ENCODE measurements at regions of chr6 and their contacts with region 1.

Region 1: DNA sequence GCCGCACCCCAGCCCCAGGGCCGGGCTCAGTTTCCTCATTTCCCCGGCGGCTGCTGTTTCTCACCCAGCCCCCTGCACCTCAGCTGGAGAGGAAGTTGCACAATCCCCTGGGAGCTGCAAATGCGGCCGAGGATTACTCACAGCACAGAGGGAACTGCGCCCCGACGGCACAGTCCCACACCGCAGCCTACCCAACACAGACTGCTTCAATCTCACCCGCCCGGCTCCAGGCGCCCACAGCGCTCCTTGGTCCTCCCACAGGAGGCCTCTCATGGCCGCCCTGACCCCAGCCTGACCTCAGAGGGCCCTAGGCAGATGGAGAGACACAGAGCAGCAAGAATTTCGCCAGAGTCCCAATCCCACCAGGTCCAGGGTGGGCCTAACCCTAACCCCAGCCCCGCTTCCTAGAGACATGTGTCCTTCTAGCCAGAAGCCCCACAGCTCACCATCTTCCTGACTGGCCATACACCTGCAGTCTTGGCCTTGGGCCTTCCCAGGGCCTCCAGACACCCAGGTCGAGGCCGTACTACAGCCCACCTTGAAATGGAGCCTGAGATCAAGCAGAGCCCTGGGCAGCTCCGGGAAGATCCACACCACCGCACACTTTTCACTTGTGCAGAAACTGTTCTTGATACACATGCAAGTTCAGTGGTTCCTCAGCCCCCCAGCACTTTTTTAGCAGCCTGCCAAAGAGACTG is 11.7 kb downstream of the TFEB start:
- DNase-seq: peak; percentile 91
- ATAC-seq: peak; percentile 90
- H3K4me3 ChIP-seq: peak overlapping the region; percentile 48 to 73 (median 59)
- H3K4me3 Mint-ChIP-seq: peak overlapping the region; percentile 96
- H3K27ac ChIP-seq: peak overlapping the region; percentile 87 to 90
- H3K27ac Mint-ChIP-seq: peak overlapping the region; percentile 99
- H3K4me1 ChIP-seq: peaks cover 95 to 100% of the 10 kb centered on the region in 2 donors
- H3K4me1 Mint-ChIP-seq: peaks cover 95% of the 10 kb centered on the region
- H3K27me3 ChIP-seq: no peaks in the 10 kb centered on the region
- H3K27me3 Mint-ChIP-seq: no peaks in the 10 kb centered on the region
- CTCF ChIP-seq: no peak

Region 2: DNA sequence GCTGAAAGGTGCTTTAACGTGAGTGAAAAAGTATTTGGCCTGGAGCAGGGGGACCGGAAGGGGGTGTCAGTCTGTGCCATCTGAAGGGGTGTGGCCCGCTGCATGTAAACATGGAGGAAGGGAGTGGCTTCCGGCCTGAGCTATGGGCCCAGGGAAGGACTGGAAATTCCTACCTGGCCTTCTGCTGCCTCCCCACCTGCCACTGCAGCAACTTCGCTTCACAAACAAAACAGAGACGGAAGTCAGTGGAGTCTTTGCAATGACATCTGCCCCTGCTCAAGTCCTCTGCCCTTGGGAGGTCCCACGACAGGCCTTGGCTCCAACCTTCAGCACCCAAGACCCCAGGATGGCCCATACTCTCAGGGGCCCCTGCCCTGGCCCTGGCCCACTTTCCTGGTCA is 205.6 kb before region 1 on chr6:
- CTCF ChIA-PET with region 1: no interaction called
- POLR2A ChIA-PET with region 1: no interaction called
- intact Hi-C with region 1: no loop called
- DNase-seq: no peak
- ATAC-seq: no peak
- H3K4me3 ChIP-seq: no peak overlapping the region
- H3K4me3 Mint-ChIP-seq: no peak overlapping the region
- H3K27ac ChIP-seq: no peak overlapping the region
- H3K27ac Mint-ChIP-seq: no peak overlapping the region
- H3K4me1 ChIP-seq: no peaks in the 10 kb centered on the region
- H3K4me1 Mint-ChIP-seq: no peaks in the 10 kb centered on the region
- H3K27me3 ChIP-seq: peaks cover 0 to 2% (median 0%) of the 10 kb centered on the region in 4 experiments
- H3K27me3 Mint-ChIP-seq: peaks cover 20% of the 10 kb centered on the region
- CTCF ChIP-seq: no peak

Region 3: GRCh38 chr6:41705996-41706835 is 17.5 kb before region 1 on chr6:
- CTCF ChIA-PET with region 1: interaction called, 176 read pairs
- POLR2A ChIA-PET with region 1: interaction called, 342 read pairs
- intact Hi-C with region 1: loop called (anchors 1 kb)
- DNase-seq: peak; percentile 94
- ATAC-seq: peak; percentile 81
- H3K4me3 ChIP-seq: peak overlapping the region in 4 of 5 experiments; percentile 33 to 65 (median 56)
- H3K4me3 Mint-ChIP-seq: peak overlapping the region; percentile 86
- H3K27ac ChIP-seq: peak overlapping the region; percentile 83 to 96
- H3K27ac Mint-ChIP-seq: peak overlapping the region; percentile 100
- H3K4me1 ChIP-seq: peaks cover 84 to 87% of the 10 kb centered on the region in 2 donors
- H3K4me1 Mint-ChIP-seq: peaks cover 97% of the 10 kb centered on the region
- H3K27me3 ChIP-seq: no peaks in the 10 kb centered on the region
- H3K27me3 Mint-ChIP-seq: no peaks in the 10 kb centered on the region
- CTCF ChIP-seq: peak; percentile 89

Region 4: DNA sequence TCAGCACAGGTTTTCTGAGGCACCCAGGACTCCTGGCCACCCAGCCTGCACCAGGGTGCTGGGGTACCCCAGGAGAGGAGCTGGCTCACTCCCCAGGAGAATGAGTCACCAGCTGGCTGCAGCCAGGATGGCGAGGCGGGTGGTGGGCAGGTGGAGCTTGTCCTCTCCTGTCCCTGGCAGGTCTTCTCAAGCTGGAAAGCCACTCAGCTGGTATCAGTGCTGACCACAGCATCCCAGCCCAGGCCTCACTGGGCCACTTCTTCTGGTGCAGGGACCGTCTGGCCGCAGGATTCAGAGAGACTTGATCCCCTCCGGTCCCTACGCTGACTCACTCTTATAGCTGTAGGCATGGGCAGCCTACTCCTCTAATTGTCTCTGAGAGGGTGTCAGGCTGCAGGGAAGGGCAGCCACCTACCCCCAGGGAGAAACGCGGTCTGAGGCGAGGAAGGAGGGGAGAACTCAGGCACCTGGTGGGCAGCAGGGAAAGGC is 10.5 kb before region 1 on chr6:
- CTCF ChIA-PET with region 1: interaction called, 176 read pairs
- POLR2A ChIA-PET with region 1: interaction called, 342 read pairs
- intact Hi-C with region 1: loop called (anchors 1 kb)
- DNase-seq: no peak
- ATAC-seq: peak; percentile 2
- H3K4me3 ChIP-seq: peak overlapping the region in 1 of 5 experiments; percentile 19
- H3K4me3 Mint-ChIP-seq: peak overlapping the region; percentile 75
- H3K27ac ChIP-seq: peak overlapping the region; percentile 43 to 77
- H3K27ac Mint-ChIP-seq: peak overlapping the region; percentile 94
- H3K4me1 ChIP-seq: peaks cover 73 to 87% of the 10 kb centered on the region in 2 donors
- H3K4me1 Mint-ChIP-seq: peaks cover 91% of the 10 kb centered on the region
- H3K27me3 ChIP-seq: no peaks in the 10 kb centered on the region
- H3K27me3 Mint-ChIP-seq: no peaks in the 10 kb centered on the region
- CTCF ChIP-seq: no peak

Region 5: DNA sequence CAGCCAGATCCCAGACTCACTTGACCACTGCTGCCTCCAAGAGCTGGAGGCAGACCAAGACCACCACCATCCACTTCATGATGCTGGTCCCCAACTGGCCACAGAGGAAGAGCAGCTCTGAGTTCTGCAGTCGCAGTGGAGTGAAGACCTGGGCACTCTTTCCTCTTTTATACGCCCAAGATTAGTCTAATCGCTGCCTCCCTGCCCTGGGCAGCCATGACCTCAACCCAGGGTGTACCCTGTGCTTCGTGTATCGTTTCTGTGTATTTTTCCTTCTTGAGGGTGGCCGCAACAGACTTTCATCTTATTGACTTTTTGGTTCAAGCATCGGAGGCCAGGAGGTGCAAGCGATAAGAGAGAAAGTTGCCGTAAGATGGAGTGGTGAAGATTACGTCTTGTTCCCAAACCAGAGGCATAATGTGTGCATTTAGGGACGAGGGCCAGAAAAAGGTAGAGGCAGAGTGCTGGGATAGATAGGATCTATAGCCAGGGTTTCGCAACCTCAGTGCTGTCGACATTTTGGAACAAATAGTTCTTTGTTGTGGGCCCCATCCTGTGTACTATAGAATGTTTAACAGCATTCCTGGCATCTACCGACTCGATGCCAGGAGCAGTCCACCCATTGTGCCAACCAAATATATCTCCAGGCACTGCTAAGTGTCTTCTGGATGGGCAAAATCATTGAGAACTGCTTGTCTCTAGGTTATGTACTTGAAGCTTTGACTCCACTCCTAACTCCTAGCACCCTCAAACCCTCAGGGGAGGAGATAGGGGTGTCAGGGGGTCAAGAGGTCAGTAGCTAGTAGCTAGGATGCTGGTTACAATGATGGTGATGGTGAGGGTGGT is 23.8 kb after region 1 on chr6 and contains the start of gene PGC:
- CTCF ChIA-PET with region 1: no interaction called
- POLR2A ChIA-PET with region 1: no interaction called
- intact Hi-C with region 1: no loop called
- DNase-seq: no peak
- ATAC-seq: no peak
- H3K4me3 ChIP-seq: no peak within 1 kb of the TSS
- H3K4me3 Mint-ChIP-seq: no peak within 1 kb of the TSS
- H3K27ac ChIP-seq: no peak within 1 kb of the TSS
- H3K27ac Mint-ChIP-seq: no peak within 1 kb of the TSS
- H3K4me1 ChIP-seq: no peaks in the 10 kb centered on the region
- H3K4me1 Mint-ChIP-seq: no peaks in the 10 kb centered on the region
- H3K27me3 ChIP-seq: no peaks in the 10 kb centered on the region
- H3K27me3 Mint-ChIP-seq: no peaks in the 10 kb centered on the region
- CTCF ChIP-seq: no peak
- total RNA-seq, gene PGC: not detected in 2 replicates

Region 6: GRCh38 chr6:42028234-42029061 is 304.8 kb after region 1 on chr6:
- CTCF ChIA-PET with region 1: no interaction called
- POLR2A ChIA-PET with region 1: no interaction called
- intact Hi-C with region 1: loop called (anchors 10 kb)
- DNase-seq: peak; percentile 29
- ATAC-seq: no peak
- H3K4me3 ChIP-seq: peak overlapping the region in 1 of 5 experiments; percentile 6
- H3K4me3 Mint-ChIP-seq: peak overlapping the region; percentile 69
- H3K27ac ChIP-seq: peak overlapping the region; percentile 57 to 93
- H3K27ac Mint-ChIP-seq: peak overlapping the region; percentile 95
- H3K4me1 ChIP-seq: peaks cover 75 to 95% of the 10 kb centered on the region in 2 donors
- H3K4me1 Mint-ChIP-seq: peaks cover 83% of the 10 kb centered on the region
- H3K27me3 ChIP-seq: no peaks in the 10 kb centered on the region
- H3K27me3 Mint-ChIP-seq: no peaks in the 10 kb centered on the region
- CTCF ChIP-seq: no peak